ENCODE measurements at regions of chr7 and their contacts with region 1.

Region 1: GRCh38 chr7:95972523-95972922 is 200.2 kb downstream of the DYNC1I1 start:
- DNase-seq: no peak
- ATAC-seq: no peak

Region 2: GRCh38 chr7:97126483-97127171 is 1154.1 kb after region 1 on chr7:
- intact Hi-C with region 1: no loop called
- DNase-seq: no peak
- ATAC-seq: no peak

Region 3: GRCh38 chr7:97499204-97499603 is 1526.7 kb after region 1 on chr7:
- intact Hi-C with region 1: loop called (anchors 5 kb)
- DNase-seq: no peak
- ATAC-seq: no peak